ENCODE measurements at regions of chr12 and their contacts with region 1.

Region 1: DNA sequence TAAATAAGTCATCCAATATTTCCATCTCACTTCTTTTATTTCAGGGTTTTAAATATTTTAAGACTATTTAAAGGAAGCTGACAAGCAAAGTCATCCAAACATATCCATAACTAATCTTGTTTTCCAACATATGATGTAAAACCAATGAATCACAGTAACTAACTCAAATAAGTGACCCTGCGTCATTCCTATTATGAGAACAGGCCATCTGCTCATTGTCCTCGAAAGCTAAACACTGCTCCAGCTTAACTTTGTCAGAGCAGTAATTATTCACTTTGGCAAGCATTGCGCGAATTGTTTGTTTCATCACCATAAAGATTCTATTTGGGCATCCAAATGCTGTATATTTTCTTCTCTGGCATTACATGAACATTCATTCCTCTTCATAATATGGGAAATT is 99.1 kb downstream of the CAPZA3 start:
- DNase-seq: peak; percentile 69
- H3K4me3 ChIP-seq: no peak overlapping the region
- H3K27ac ChIP-seq: peak overlapping the region in 3 of 4 donors; percentile 25 to 52 (median 42)
- H3K4me1 ChIP-seq: peaks cover 0 to 17% (median 11%) of the 10 kb centered on the region in 4 donors
- H3K27me3 ChIP-seq: no peaks in the 10 kb centered on the region
- CTCF ChIP-seq: no peak
- EP300 ChIP-seq: peak; percentile 88 to 97 (median 91)
- POLR2A ChIP-seq: no peak

Region 2: DNA sequence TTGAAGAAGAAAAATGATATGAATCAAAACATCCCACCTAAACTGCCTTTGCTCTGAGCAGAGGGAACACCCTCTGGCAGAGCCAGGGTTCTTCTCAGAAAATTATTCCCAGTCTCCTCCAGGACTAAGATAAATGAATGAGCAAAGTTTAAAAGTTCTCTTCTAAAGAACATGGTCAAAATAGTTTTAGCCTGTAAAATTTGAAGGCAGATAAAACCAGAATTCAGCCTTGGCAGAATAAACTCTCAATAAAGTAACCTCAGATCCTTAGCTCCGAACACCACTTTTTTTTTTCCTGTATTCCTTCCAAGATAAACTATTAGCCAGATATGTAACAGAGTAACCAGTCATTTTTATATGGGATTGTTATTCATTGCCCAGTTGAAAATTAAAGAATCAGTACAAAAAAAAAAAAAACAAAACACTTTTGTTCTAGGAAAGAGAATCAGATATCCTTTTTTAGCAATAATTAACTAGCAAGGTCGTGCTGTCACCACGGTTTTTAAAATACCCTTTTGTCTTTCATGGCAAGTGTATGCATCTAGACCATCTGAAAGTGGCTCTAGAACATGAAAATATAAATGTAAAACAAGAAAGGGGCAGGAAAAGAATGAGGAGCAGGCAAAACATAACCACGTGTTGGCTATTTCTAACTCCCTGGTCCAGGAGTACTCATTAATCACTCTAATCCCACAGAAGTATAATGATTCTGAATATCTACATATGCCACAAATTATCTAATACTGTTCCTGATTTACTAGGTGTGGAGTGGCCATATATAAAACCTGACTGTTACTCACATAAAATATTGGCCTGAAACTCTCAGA is 38.3 kb before region 1 on chr12:
- intact Hi-C with region 1: loop called (anchors 2 kb)
- DNase-seq: no peak
- H3K4me3 ChIP-seq: no peak overlapping the region
- H3K27ac ChIP-seq: peak overlapping the region; percentile 35 to 72 (median 58)
- H3K4me1 ChIP-seq: peaks cover 0 to 22% (median 19%) of the 10 kb centered on the region in 4 donors
- H3K27me3 ChIP-seq: no peaks in the 10 kb centered on the region
- CTCF ChIP-seq: no peak
- EP300 ChIP-seq: peak in 3 of 4 donors; percentile 4 to 32 (median 13)
- POLR2A ChIP-seq: no peak

Measured in sigmoid colon (tissue), 7 donors.